IMR-90 (cell line): ENCODE measurements at regions of chr3 and their contacts with region 1.

Region 1: DNA sequence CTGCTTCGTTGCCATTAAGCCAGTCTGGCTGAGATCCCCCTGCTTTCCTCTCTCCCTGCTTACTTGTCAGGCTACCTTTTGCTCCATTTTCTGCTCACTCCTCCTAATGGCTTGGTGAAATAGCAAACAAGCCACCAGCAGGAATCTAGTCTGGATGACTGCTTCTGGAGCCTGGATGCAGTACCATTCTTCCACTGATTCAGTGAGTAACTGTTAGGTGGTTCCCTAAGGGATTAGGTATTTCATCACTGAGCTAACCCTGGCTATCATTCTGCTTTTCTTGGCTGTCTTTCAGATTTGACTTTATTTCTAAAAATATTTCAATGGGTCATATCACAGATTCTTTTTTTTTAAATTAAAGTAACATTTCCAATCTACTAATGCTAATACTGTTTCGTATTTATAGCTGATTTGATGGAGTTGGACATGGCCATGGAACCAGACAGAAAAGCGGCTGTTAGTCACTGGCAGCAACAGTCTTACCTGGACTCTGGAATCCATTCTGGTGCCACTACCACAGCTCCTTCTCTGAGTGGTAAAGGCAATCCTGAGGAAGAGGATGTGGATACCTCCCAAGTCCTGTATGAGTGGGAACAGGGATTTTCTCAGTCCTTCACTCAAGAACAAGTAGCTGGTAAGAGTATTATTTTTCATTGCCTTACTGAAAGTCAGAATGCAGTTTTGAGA is 25.0 kb downstream of the CTNNB1 start:
- DNase-seq: peak; percentile 88
- ATAC-seq: peak; percentile 94
- H3K4me3 ChIP-seq: no peak overlapping the region
- H3K27ac ChIP-seq: no peak overlapping the region
- H3K4me1 ChIP-seq: peaks cover 14% of the 10 kb centered on the region
- H3K27me3 ChIP-seq: no peaks in the 10 kb centered on the region
- CTCF ChIP-seq: no peak
- POLR2A ChIP-seq: no peak
- RAD21 ChIP-seq: no peak

Region 2: DNA sequence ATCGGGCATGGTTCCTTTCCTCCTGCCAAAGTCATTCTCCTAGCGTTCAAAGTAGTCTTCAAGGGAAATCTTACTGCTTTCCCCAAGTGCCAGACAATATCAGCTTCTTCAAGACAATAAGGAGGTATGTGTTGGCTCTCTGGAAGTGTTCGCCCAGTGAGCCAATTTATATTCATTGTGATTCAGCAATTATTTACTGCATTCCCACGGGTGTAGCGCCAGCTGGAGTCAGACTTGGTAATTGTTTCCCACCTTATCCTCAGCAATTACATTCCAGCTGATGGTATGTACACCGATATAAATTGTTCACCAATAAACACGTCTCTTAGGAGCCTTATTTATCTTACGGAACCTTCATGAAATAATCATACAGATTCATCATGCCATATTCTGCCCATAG is 128.6 kb before region 1 on chr3:
- CTCF ChIA-PET with region 1: no interaction called
- POLR2A ChIA-PET with region 1: no interaction called
- dilution Hi-C with region 1: no loop called
- in situ Hi-C with region 1: no loop called
- intact Hi-C with region 1: no loop called
- DNase-seq: no peak
- ATAC-seq: no peak
- H3K4me3 ChIP-seq: no peak overlapping the region
- H3K27ac ChIP-seq: no peak overlapping the region
- H3K4me1 ChIP-seq: no peaks in the 10 kb centered on the region
- H3K27me3 ChIP-seq: no peaks in the 10 kb centered on the region
- CTCF ChIP-seq: no peak
- POLR2A ChIP-seq: no peak
- RAD21 ChIP-seq: no peak

Region 3: DNA sequence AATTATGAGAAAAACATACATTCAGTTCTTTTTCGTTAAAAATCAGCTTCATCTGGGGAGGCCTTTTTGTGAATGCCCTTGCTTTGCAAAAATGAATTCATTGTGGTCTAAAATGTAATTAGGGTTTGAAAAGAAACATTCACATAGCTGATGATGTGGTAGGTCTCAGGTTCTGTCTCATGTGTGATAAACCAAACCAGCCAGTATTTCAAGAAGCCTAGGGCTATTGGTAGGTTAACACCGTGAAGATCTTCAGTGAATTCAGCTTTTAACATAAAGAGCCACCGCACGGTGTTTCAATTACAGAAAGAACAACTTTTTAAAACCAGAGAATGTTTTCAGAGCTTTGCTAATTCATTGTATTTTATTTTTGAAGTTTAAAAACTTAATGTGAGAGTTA is 16.9 kb after region 1 on chr3:
- CTCF ChIA-PET with region 1: no interaction called
- POLR2A ChIA-PET with region 1: no interaction called
- dilution Hi-C with region 1: no loop called
- in situ Hi-C with region 1: no loop called
- intact Hi-C with region 1: loop called (anchors 2 kb)
- DNase-seq: no peak
- ATAC-seq: no peak
- H3K4me3 ChIP-seq: no peak overlapping the region
- H3K27ac ChIP-seq: no peak overlapping the region
- H3K4me1 ChIP-seq: no peaks in the 10 kb centered on the region
- H3K27me3 ChIP-seq: no peaks in the 10 kb centered on the region
- CTCF ChIP-seq: no peak
- POLR2A ChIP-seq: no peak
- RAD21 ChIP-seq: no peak